Endothelial cell of umbilical vein (primary cell): ENCODE measurements at regions of chr13 and their contacts with region 1.

Region 1: DNA sequence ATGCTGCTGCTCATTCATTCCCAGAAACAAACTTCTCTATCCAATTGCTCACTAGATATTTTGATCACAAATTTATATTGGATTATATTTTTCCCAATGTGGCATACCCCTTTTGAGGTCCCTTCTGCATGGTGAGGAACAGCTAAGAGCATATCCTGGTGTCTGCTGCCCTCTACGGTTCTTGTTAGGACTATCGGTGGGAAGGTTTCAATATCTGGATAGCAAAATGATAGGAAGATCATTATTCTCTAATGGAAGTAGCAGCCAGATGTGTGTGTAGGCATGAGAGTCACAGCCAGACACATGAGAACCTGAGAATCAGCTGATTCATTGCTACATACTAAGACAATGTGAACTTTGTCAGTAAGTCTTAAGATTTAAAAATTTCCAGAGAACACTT is 1422.4 kb upstream of the MIR17HG start:
- DNase-seq: peak; percentile 56
- H3K4me3 ChIP-seq: no peak overlapping the region
- H3K27ac ChIP-seq: no peak overlapping the region
- H3K4me1 ChIP-seq: no peaks in the 10 kb centered on the region
- H3K27me3 ChIP-seq: no peaks in the 10 kb centered on the region
- CTCF ChIP-seq: peak; percentile 41 to 42
- POLR2A ChIP-seq: no peak

Region 2: GRCh38 chr13:89361909-89362308 is 563.2 kb before region 1 on chr13:
- CTCF ChIA-PET with region 1: interaction called, 3 read pairs
- POLR2A ChIA-PET with region 1: no interaction called
- dilution Hi-C with region 1: no loop called
- intact Hi-C with region 1: loop called (anchors 10 kb)
- DNase-seq: peak; percentile 26
- H3K4me3 ChIP-seq: no peak overlapping the region
- H3K27ac ChIP-seq: no peak overlapping the region
- H3K4me1 ChIP-seq: no peaks in the 10 kb centered on the region
- H3K27me3 ChIP-seq: no peaks in the 10 kb centered on the region
- CTCF ChIP-seq: peak in 1 of 2 donors; percentile 15
- POLR2A ChIP-seq: no peak

Region 3: GRCh38 chr13:89432997-89433396 is 492.1 kb before region 1 on chr13:
- CTCF ChIA-PET with region 1: interaction called, 7 read pairs
- POLR2A ChIA-PET with region 1: no interaction called
- dilution Hi-C with region 1: no loop called
- intact Hi-C with region 1: loop called (anchors 10 kb)
- DNase-seq: peak; percentile 26
- H3K4me3 ChIP-seq: no peak overlapping the region
- H3K27ac ChIP-seq: no peak overlapping the region
- H3K4me1 ChIP-seq: no peaks in the 10 kb centered on the region
- H3K27me3 ChIP-seq: no peaks in the 10 kb centered on the region
- CTCF ChIP-seq: no peak
- POLR2A ChIP-seq: no peak